AG04449 (cell line): ENCODE measurements at regions of chr7 and their contacts with region 1.

Region 1: DNA sequence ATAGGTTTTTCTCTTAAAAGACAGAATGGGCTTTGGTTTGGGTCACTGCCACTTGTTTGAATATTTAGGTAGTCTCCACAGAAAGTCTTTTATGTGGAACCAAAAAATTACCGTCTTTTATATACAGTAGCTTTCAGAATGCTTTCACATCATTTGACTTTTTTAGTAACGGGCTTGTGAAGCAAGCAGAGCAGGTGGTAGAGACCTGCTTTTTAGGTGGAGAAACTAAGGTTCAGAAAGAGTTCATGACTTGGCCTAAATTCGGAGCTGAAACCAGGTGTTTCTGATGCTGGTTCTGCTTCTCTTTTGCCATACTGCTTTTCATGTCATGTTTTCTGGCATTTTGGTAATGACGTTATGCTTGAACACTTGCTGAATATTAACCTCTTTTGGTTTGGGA is 36.3 kb downstream of the GARS1 start:
- DNase-seq: no peak
- H3K4me3 ChIP-seq: no peak overlapping the region
- CTCF ChIP-seq: no peak

Region 2: DNA sequence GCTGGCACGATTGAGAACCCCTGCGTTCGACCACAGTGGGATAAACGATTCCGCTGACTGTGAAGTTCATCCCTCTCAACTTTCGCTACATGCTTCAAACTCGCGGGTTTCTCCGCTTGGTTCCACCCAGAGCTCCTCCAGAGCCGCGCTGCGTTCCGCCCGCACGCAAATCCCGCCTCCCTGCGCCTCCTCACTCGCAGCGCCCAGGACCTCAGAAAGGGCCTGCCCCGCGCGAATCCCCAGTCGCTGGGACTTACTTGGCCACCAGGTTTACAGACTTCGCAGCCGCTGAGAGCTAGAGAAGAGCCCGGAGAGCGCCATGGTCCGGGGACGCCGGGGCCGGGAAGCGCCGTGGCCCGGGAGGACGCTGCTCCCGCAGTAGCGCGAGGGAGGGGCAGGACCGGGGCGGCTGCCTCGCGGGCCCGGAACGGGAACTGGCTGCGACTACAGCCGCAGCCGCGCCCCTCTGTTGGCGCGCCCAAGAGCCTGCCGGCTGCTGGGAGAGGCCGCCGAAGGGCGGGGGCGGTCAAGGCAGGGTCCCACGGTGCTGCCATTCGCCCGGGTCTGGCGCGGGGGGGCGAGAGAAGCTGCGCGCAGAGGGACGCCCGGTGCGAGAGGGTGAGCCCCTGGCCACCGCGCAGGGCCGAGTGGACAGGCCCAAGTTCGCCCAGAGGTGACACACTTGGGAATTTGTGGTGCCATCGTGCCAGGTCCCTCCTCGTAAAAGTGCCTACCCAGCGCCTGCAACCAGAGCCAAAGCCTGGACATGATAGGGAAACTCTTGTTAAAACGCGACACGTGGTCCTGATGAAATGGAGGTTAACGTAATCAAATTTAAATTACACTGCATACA is 152.4 kb before region 1 on chr7 and contains the start of gene NOD1:
- CTCF ChIA-PET with region 1: no interaction called
- POLR2A ChIA-PET with region 1: no interaction called
- DNase-seq: no peak
- H3K4me3 ChIP-seq: peak within 1 kb of the TSS; percentile 74
- CTCF ChIP-seq: no peak

Region 3: DNA sequence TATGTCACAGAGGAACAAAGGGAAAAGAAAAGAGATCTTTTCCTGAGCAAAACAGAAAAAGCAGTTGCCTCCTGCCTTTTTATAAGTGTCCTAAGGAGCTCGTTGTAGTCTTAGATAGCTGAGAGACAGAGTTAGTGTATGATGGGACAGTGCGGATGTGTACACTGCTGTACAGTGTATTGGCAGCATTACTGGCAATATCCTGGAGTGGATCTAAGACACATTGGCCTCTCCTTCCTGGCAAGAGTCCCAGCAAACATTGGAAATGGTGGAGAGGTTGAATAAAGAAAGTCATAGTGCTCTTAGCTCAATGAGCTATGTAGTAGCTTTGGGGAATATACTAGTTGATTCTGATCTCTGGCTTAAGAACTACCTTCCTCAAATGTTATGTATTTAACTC is 13.6 kb before region 1 on chr7:
- CTCF ChIA-PET with region 1: interaction called, 10 read pairs
- POLR2A ChIA-PET with region 1: interaction called, 4 read pairs
- DNase-seq: no peak
- H3K4me3 ChIP-seq: no peak overlapping the region
- CTCF ChIP-seq: no peak